Left colon (tissue), 2 donors: ENCODE measurements at regions of chr4 and their contacts with region 1.

Region 1: DNA sequence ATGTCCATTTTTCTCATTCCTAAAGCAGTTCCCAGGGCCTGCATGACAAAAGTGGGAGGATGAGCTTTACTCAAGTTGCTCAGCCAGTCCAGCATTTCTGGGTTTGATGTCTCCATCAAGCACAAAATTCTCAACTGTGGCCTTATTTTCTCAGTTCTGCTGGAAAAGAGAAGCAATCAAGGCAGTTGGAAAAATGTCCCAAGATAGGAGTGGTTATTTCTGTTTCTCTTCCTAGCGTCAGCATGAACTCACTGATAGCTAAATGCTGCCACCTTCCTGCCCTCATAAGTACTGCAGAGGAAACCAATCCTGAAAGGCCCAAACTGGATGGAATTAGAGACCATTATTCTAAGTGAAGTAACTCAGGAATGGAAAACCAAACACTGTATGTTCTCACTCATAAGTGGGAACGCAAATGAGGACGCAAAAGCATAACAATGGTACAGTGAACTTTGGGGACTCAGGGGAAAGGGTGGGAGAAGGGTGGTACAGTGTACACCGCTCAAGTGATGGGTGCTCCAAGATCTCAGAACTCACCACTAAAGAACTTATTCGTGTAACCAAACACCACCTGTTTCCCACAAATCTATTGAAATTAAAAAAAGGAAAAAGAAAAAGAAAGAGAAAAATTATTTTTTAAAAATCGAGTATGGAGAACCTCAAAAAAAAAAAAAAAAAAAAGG is 29.6 kb downstream of the ADH7 start:
- DNase-seq: peak; percentile 54 to 74
- ATAC-seq: peak; percentile 60

Region 2: DNA sequence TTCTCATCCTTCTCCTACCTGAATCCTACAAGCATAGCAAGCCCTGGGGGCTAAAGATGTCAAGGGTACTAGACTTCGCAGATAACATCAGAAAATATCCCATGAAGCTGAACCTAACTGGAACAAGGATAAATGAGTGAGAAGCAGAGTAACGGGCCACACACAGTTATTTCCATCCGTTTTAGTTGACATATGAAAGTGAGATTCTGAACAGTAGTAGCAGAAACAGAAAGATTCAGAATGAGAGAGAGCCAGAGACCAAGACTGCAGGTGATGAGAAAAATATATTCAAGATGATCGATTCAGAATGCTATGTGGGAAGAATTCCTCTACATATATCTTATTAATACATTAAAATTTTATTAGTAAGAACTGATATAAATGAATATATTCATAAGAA is 912.3 kb before region 1 on chr4:
- intact Hi-C with region 1: no loop called
- DNase-seq: no peak
- ATAC-seq: no peak

Region 3: DNA sequence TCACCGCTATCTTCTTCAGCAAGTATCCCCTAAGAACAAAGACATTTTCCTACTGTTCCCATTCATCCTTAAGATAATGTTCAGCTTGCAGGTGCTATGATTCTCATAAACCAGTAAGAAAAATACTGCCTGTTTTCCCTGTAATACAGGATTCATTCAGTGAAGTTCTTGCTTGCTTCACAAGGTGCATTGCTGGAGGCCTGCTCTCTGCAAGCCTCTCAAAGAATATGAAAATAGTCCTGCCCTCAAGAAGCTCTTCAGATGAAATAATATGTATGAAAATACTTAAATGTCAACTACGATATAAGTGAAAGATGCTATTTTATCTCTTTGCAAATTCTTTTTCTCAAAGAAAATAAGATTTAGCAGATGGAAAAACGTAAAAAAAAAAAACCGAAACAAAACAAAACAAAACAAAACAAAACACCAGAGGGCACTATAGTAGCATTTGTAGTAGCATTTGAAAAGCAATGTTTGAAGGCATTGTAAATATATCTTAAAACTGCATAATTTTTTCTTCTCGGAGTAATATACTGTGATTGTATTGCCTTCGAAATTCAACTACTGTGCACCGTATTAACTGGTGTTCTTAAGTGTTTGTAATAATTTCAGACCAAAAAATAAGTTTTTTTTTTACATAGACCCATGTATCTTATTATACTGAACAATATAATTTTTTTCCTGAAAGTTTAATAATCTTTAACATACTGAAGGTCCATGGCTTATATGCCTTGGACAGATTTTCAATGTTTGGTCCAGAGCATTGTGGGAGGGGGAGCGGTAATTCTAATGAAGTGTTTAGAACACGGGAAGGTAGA is 287.5 kb before region 1 on chr4:
- intact Hi-C with region 1: loop called in 1 of 2 experiments (anchors 5 kb)
- DNase-seq: no peak
- ATAC-seq: peak; percentile 51

Region 4: DNA sequence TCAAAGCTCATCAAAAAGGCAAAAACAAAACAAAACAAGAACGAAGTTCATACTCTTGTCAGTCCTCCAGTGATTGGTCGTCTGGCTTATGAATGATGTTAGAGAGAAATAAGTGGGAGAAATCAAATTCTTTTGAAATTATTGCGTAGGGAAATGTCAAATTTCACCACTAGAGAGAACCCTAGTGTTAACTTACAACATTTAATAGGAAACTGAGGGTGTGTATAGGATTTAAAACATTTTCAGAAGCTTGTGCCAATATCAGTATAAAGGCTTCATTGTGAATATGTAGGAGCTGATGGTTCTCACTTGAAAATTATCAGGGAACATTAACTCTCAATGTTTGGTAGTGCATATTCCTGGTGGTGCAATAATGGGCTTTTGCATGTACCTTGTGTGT is 203.9 kb before region 1 on chr4:
- intact Hi-C with region 1: loop called in 1 of 2 experiments (anchors 5 kb)
- DNase-seq: no peak
- ATAC-seq: peak; percentile 43